ENCODE measurements at regions of chr1 and their contacts with region 1.

Region 1: DNA sequence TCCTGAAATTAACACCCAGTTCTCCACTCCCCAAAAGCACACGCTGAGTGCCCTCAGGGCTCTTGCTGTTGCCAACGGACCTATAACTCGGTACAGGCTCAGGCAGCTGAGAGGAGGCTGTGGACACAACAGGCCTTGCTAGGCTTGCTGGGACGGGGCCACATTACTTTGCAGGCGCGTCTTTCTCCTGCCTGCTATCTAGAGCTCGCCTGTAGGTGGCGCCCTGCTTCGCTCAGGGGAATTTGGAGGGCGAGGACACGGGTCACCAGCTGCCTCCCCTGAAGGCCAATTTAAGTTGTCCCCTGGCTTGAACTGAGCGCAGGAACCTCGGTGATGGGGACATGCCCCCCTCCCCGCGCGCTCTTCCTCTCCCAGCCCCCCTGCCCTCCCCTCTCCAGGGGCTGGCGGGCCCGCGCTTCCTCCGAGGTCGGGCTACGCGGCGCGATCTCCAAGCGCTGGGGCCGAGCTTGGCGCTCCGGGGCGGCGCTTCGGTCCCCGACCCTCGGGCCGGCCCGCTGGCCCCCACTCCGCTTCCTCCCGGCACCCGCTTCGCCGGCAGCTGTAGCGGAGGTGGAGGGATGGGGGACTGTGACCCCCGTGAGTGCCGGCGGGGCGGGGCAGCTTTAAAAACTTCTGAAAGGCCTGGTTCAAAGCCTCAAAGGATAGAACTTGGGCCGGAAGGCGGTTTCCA is 32.4 kb upstream of the NFIA start:
- DNase-seq: peak; percentile 94 to 95 (median 95)
- ATAC-seq: peak; percentile 88 to 93 (median 90)
- H3K4me3 ChIP-seq: peak overlapping the region; percentile 78 to 93 (median 84)
- H3K27ac ChIP-seq: peak overlapping the region; percentile 82 to 97 (median 91)
- H3K4me1 ChIP-seq: peaks cover 0 to 14% (median 7%) of the 10 kb centered on the region in 4 donors
- H3K27me3 ChIP-seq: no peaks in the 10 kb centered on the region
- CTCF ChIP-seq: peak; percentile 96 to 99 (median 97)
- POLR2A ChIP-seq: no peak

Region 2: GRCh38 chr1:60153961-60154360 is 896.0 kb before region 1 on chr1:
- intact Hi-C with region 1: loop called in 1 of 2 experiments (anchors 10 kb)
- DNase-seq: no peak
- ATAC-seq: no peak
- H3K4me3 ChIP-seq: no peak overlapping the region
- H3K27ac ChIP-seq: no peak overlapping the region
- H3K4me1 ChIP-seq: peaks cover 0 to 7% (median 0%) of the 10 kb centered on the region in 4 donors
- H3K27me3 ChIP-seq: no peaks in the 10 kb centered on the region
- CTCF ChIP-seq: no peak
- POLR2A ChIP-seq: no peak

Region 3: GRCh38 chr1:60279798-60280197 is 770.2 kb before region 1 on chr1:
- intact Hi-C with region 1: loop called in 1 of 2 experiments (anchors 10 kb)
- DNase-seq: no peak
- ATAC-seq: no peak
- H3K4me3 ChIP-seq: no peak overlapping the region
- H3K27ac ChIP-seq: peak overlapping the region in 1 of 3 donors; percentile 74
- H3K4me1 ChIP-seq: peaks cover 0 to 59% (median 10%) of the 10 kb centered on the region in 4 donors
- H3K27me3 ChIP-seq: no peaks in the 10 kb centered on the region
- CTCF ChIP-seq: no peak
- POLR2A ChIP-seq: no peak

Region 4: GRCh38 chr1:61279570-61279969 is 229.6 kb after region 1 on chr1:
- intact Hi-C with region 1: no loop called
- DNase-seq: no peak
- ATAC-seq: no peak
- H3K4me3 ChIP-seq: no peak overlapping the region
- H3K27ac ChIP-seq: no peak overlapping the region
- H3K4me1 ChIP-seq: peaks cover 0 to 9% (median 4%) of the 10 kb centered on the region in 4 donors
- H3K27me3 ChIP-seq: no peaks in the 10 kb centered on the region
- CTCF ChIP-seq: no peak
- POLR2A ChIP-seq: no peak

Region 5: GRCh38 chr1:61337981-61338848 is 288.2 kb after region 1 on chr1:
- intact Hi-C with region 1: loop called (anchors 10 kb)
- DNase-seq: peak; percentile 65 to 82 (median 67)
- ATAC-seq: peak; percentile 93 to 97 (median 94)
- H3K4me3 ChIP-seq: peak overlapping the region in 2 of 3 donors; percentile 26 to 32
- H3K27ac ChIP-seq: peak overlapping the region; percentile 61 to 66 (median 64)
- H3K4me1 ChIP-seq: peaks cover 0 to 28% (median 12%) of the 10 kb centered on the region in 4 donors
- H3K27me3 ChIP-seq: no peaks in the 10 kb centered on the region
- CTCF ChIP-seq: peak; percentile 60 to 79 (median 72)
- POLR2A ChIP-seq: peak; percentile 15

Region 6: DNA sequence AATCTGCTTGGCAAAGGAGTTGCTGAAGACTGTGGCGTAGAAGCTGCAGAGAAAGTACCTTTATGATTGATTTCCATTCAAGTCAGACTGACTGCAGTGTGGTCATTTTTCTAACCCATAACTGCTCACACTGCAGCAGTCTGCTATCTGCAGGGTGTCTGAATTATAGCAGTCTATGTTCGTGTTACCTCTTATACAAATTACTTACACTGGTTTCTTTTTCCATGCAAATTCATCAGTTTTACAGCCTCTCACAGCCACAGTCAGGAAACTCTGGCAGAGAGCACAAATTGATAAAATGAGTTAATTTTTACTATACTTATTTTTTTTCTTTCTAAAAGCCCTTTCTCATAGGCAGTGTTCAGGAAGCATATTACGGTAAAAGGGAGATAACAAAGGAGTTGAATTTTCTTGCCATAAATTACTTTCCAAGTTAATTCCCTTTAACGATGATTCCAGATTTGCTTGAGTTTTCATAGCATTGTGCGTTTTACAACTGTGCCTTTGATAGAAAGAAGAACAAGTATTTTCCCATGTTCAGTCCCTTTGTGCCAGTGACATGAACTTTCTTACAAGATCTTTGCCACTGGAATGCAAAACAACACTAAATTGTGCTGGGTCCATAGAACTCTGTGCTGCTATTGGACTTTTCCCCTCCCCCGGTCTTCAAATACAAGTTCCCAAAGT is 293.9 kb after region 1 on chr1:
- intact Hi-C with region 1: loop called (anchors 10 kb)
- DNase-seq: no peak
- ATAC-seq: peak in 3 of 4 donors; percentile 9 to 27 (median 26)
- H3K4me3 ChIP-seq: no peak overlapping the region
- H3K27ac ChIP-seq: no peak overlapping the region
- H3K4me1 ChIP-seq: peaks cover 0 to 20% (median 7%) of the 10 kb centered on the region in 4 donors
- H3K27me3 ChIP-seq: no peaks in the 10 kb centered on the region
- CTCF ChIP-seq: no peak
- POLR2A ChIP-seq: no peak

Region 7: GRCh38 chr1:61453111-61453961 is 403.3 kb after region 1 on chr1:
- intact Hi-C with region 1: loop called in 1 of 2 experiments (anchors 10 kb)
- DNase-seq: peak; percentile 71 to 75 (median 75)
- ATAC-seq: peak; percentile 87 to 94 (median 92)
- H3K4me3 ChIP-seq: no peak overlapping the region
- H3K27ac ChIP-seq: peak overlapping the region in 1 of 3 donors; percentile 58
- H3K4me1 ChIP-seq: peaks cover 0 to 24% (median 10%) of the 10 kb centered on the region in 4 donors
- H3K27me3 ChIP-seq: no peaks in the 10 kb centered on the region
- CTCF ChIP-seq: peak; percentile 65 to 76 (median 70)
- POLR2A ChIP-seq: no peak